ENCODE measurements at regions of chr5 and their contacts with region 1.

Region 1: DNA sequence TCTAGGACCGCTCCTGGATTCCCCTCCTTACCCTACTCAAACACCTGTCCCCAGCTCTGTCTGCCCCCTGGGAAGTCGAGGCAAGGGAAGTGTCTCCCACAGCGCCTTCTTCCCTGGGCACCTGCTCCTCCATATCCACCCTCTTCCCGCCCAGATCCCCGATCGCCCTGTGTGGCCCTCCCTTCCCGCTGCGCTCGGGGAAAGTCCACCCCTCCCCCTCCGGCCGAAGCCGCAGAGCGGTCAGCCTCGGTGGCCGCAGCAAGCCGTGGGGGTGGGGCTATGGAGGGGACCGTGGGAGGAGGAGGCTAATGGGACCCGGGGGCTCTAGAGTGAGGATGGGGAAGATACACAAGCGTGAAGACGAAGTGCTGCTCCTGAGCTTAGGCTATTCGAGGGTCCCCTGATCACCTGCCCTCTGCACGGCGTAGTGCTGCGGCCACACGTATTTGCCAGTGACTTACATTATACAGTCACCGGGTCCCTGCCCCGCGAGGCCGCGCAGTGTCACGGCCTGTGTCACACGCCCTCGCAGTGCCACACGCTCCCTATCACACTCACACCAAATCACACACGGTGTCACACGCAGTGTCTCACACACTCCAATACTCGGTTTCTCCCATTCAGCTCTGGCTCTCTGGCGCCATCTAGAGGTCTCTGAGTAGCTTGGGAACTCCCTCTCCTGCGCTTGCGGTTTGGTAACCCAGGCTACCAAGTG is 658 bp upstream of the PCDH1 start:
- DNase-seq: peak; percentile 17
- H3K4me3 ChIP-seq: peak overlapping the region; percentile 19
- CTCF ChIP-seq: peak; percentile 97

Region 2: DNA sequence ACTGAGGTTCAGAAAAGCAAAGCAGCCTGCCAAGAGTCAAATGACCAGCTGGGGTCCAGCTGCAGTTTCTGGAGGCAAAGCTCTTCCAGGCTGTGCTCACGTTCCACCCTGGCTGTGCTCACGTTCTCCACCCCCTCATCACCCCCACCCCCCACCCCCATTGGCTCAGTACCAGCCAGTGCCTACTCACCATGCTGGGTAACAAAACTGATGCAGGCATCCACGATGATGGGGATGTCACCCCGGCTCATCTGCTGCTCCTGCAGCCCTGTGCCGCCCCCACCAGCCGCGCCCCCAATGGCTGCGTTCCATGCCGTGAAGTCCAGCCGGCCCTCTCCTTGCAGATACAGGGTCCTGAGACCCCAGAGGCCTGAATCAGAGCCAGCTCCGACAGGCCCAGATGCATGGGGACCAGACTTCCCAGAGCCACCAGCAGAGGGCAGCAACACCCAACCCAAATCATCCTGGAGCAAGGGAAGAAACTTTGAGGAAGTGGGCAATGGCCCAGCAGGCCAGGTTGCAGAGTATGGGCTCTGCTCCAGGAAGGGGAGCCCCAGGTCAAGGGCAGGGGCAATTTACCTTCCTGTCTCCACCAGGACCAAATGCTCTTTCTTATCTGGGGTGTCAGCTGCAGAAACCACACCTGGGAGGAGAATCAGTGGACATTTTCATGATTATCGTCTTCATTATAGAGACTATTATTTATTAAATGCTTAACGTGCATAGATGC is 214.0 kb before region 1 on chr5:
- CTCF ChIA-PET with region 1: interaction called, 30 read pairs
- POLR2A ChIA-PET with region 1: no interaction called
- DNase-seq: no peak
- H3K4me3 ChIP-seq: no peak overlapping the region
- CTCF ChIP-seq: peak; percentile 90

Region 3: GRCh38 chr5:141713616-141714309 is 165.1 kb before region 1 on chr5:
- CTCF ChIA-PET with region 1: interaction called, 18 read pairs
- POLR2A ChIA-PET with region 1: no interaction called
- DNase-seq: no peak
- H3K4me3 ChIP-seq: no peak overlapping the region
- CTCF ChIP-seq: no peak

Region 4: DNA sequence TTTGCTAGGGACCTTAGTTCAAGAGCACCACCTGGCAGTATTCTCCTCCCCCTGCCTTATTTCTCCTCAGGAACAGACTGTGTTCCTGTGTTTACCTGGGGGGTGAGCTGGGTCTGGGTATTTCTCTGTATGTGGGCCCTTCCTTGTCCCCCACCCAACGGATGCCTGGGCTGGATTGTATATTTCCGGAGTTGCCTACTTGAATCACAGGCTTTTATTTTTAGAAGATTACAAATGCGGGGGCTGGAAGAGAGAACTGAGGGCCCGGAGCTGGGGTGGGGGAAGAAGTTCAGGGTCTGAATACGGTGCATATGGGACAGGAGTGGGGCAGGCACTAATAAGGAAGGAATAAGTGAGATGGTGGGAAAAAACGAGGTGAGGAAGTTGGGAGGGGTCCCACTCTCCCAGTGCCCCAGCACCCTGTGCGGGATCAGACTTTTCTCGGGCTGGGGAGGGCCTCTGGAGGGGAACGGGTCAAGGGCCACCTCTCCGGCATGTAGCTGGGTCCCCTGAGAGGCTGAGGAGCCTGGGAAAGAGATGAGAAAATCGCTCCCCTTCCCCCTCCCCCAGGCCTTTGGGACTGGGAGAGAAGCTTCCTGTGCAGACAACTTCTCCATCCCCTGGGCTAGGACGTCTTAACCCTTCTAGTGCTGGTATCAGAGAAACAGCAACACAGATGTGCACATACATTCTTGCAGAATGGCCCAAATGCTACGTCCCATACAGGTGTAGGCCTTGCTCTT is 42.8 kb before region 1 on chr5:
- CTCF ChIA-PET with region 1: interaction called, 10 read pairs
- POLR2A ChIA-PET with region 1: no interaction called
- DNase-seq: no peak
- H3K4me3 ChIP-seq: no peak overlapping the region
- CTCF ChIP-seq: no peak

Region 5: GRCh38 chr5:141866149-141867120 is 12.4 kb before region 1 on chr5:
- CTCF ChIA-PET with region 1: interaction called, 24 read pairs
- POLR2A ChIA-PET with region 1: no interaction called
- DNase-seq: no peak
- H3K4me3 ChIP-seq: no peak overlapping the region
- CTCF ChIP-seq: no peak

Region 6: DNA sequence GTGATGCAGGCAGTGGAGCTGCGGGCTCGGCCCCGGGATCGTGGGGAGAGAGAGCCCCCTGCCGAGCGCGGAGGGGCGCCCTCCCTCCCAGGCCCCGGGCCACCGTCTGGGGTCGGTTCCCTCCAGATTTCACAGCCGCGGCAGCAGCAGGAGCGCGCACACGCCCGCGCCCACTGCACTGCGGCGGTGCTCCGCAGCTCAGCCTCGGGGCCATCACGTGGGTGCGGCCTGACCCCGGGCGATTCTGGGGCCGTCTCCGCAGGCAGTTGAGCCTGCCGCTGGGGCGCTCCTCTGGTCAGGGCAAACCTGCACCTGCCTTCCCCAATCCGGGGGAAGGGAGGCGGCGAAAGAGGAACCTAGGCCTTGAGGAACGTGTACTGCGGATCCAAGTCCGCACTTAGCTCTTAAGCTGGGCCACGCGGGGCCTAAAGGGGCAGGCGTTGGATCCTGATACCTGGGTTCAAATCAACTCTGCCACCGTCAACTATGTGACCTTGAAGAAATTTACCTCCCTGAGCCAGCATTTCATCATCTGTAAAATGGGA is 35.4 kb after region 1 on chr5:
- CTCF ChIA-PET with region 1: interaction called, 24 read pairs
- POLR2A ChIA-PET with region 1: no interaction called
- DNase-seq: no peak
- H3K4me3 ChIP-seq: peak overlapping the region; percentile 37
- CTCF ChIP-seq: peak; percentile 26

Region 7: DNA sequence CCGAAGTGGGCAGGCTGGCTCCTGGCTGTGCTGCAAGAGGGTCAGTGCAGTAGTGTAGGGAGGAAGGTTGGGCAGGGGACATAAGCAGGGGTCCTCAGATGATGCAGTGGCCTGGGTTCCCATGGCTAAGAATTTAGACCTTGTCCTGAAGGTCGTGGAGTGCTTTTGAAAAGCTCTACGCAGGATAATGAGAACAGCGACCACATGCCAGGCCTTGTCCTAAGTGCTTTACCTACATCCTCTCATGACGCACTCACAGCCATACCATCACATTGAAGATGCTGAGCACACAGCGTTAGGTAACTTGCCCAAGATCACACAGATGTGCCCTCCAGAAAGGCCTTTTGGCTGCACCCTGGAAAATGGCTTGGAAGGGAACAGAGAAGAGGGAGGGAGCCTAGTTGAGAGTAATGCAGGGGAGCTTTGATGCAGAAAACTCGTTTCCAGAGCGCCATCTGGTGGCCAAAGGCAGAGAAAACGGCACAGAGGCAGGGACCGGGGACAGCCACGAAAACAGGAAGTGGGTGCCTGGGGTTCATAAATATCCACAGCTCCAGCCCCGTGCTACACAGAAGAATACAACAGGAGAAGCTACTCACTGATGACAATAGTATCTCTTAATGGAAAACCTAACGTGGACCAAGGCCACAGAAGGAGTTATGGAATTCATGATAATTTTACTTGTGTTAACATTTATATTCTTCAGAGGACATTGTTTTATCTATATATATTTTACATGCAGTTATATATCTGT is 81.8 kb after region 1 on chr5:
- CTCF ChIA-PET with region 1: interaction called, 115 read pairs
- POLR2A ChIA-PET with region 1: no interaction called
- DNase-seq: peak; percentile 16
- H3K4me3 ChIP-seq: no peak overlapping the region
- CTCF ChIP-seq: peak; percentile 87

Region 8: GRCh38 chr5:142087920-142088679 is 209.2 kb after region 1 on chr5:
- CTCF ChIA-PET with region 1: no interaction called
- POLR2A ChIA-PET with region 1: no interaction called
- DNase-seq: no peak
- H3K4me3 ChIP-seq: no peak overlapping the region
- CTCF ChIP-seq: no peak

Measured in AG04449 (cell line).